Naive thymus-derived CD4-positive, alpha-beta T cell (primary cell): ENCODE measurements at regions of chr7 and their contacts with region 1.

Region 1: GRCh38 chr7:27196287-27196767 is 3.6 kb downstream of the HOXA13 start:
- DNase-seq: peak; percentile 62 to 82 (median 72)
- ATAC-seq: peak; percentile 55
- H3K4me3 ChIP-seq: no peak overlapping the region
- H3K4me3 Mint-ChIP-seq: no peak overlapping the region
- H3K27ac ChIP-seq: no peak overlapping the region
- H3K27ac Mint-ChIP-seq: peak overlapping the region in 2 of 9 donors; percentile 69
- H3K4me1 ChIP-seq: peaks cover 19 to 34% of the 10 kb centered on the region in 2 donors
- H3K4me1 Mint-ChIP-seq: peaks cover 9 to 47% (median 36%) of the 10 kb centered on the region in 7 donors
- H3K27me3 ChIP-seq: peaks cover 37 to 69% of the 10 kb centered on the region in 2 donors
- H3K27me3 Mint-ChIP-seq: peaks cover 78 to 85% (median 80%) of the 10 kb centered on the region in 5 donors

Region 2: DNA sequence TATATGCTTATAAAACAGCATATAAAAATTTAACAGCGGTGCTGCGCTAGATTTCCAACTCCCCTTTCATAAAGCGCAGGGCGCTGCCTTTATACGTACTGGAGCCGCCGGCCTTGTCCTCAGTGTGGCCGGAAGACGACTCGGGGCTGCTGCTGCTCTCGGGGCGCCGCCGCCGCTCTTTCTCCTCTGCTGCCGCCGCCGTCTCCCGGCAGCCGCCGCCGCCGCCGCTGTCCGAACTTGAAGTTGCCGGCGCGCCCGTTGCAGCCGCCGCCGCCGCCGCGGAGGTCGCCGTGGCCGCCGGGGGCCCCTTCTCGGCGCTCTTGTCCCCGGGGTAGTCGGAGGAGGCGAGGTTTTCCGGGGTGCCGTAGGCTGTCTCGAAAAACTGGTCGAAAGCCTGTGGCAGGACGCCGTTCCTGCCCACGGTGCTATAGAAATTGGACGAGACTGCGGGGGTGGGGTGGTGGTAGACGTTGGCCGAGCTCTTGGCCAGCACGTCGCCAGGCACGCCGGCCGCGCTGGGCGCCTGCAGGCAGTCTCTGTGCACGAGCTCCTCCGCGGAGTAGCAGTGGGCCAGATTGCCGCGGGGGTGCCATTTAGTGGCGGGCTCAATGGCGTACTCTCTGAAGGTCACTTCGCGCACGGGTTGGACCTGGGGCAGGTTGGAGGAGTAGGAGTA is 11.9 kb before region 1 on chr7:
- CTCF ChIA-PET with region 1: interaction called, 4 read pairs
- POLR2A ChIA-PET with region 1: no interaction called
- intact Hi-C with region 1: loop called in 1 of 2 experiments (anchors 2 kb)
- DNase-seq: peak in 2 of 9 donors; percentile 36 to 38
- ATAC-seq: peak; percentile 22
- H3K4me3 ChIP-seq: peak overlapping the region; percentile 39
- H3K4me3 Mint-ChIP-seq: peak overlapping the region; percentile 69 to 87 (median 79)
- H3K27ac ChIP-seq: no peak overlapping the region
- H3K27ac Mint-ChIP-seq: peak overlapping the region in 7 of 9 donors; percentile 43 to 84 (median 73)
- H3K4me1 ChIP-seq: peaks cover 40 to 52% of the 10 kb centered on the region in 2 donors
- H3K4me1 Mint-ChIP-seq: peaks cover 29 to 62% (median 51%) of the 10 kb centered on the region in 7 donors
- H3K27me3 ChIP-seq: peaks cover 47 to 89% of the 10 kb centered on the region in 2 donors
- H3K27me3 Mint-ChIP-seq: peaks cover 78 to 92% (median 81%) of the 10 kb centered on the region in 5 donors

Region 3: GRCh38 chr7:27576360-27576944 is 380.1 kb after region 1 on chr7:
- CTCF ChIA-PET with region 1: interaction called, 10 read pairs
- POLR2A ChIA-PET with region 1: no interaction called
- intact Hi-C with region 1: loop called (anchors 1 kb)
- DNase-seq: peak in 5 of 9 donors; percentile 15 to 38 (median 29)
- ATAC-seq: peak; percentile 67
- H3K4me3 ChIP-seq: no peak overlapping the region
- H3K4me3 Mint-ChIP-seq: no peak overlapping the region
- H3K27ac ChIP-seq: no peak overlapping the region
- H3K27ac Mint-ChIP-seq: no peak overlapping the region
- H3K4me1 ChIP-seq: no peaks in the 10 kb centered on the region
- H3K4me1 Mint-ChIP-seq: peaks cover 0 to 6% (median 0%) of the 10 kb centered on the region in 7 donors
- H3K27me3 ChIP-seq: no peaks in the 10 kb centered on the region
- H3K27me3 Mint-ChIP-seq: peaks cover 0 to 3% (median 0%) of the 10 kb centered on the region in 5 donors

Region 4: DNA sequence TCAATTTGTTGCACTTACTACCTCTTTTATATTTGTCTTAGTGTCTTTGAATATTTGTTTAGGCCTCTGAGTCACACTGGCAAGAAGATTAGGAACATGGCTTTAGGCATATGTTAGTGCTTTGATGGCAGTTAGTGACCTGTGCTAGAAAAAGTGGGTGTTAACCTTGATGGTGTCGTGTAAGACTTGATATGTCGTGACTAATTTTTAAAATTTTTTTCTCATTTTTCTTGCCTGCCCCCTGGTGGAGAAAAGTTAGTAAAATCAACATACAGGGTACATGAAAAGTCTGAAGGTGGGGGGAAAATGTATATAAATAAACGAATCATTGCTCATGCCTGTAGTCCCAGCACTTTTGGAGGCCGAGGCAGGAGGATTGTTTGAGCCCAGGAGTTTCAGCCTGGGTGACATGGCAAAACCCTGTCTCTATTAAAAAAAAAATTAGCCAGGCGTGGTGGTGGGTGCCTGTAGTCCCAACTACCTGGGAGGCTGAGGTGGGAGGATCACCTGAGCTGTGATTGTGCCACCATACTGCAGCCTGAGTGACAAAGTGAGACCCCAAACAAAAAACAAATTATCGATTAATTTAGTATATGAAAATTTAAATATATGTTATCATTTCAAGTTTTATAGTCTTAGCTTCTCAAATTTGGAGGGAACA is 588.2 kb after region 1 on chr7:
- CTCF ChIA-PET with region 1: interaction called, 3 read pairs
- POLR2A ChIA-PET with region 1: no interaction called
- intact Hi-C with region 1: loop called in 1 of 2 experiments (anchors 1 kb)
- DNase-seq: peak in 7 of 9 donors; percentile 30 to 54 (median 43)
- ATAC-seq: peak; percentile 73
- H3K4me3 ChIP-seq: no peak overlapping the region
- H3K4me3 Mint-ChIP-seq: no peak overlapping the region
- H3K27ac ChIP-seq: no peak overlapping the region
- H3K27ac Mint-ChIP-seq: peak overlapping the region in 1 of 9 donors; percentile 15
- H3K4me1 ChIP-seq: no peaks in the 10 kb centered on the region
- H3K4me1 Mint-ChIP-seq: peaks cover 4 to 35% (median 20%) of the 10 kb centered on the region in 7 donors
- H3K27me3 ChIP-seq: no peaks in the 10 kb centered on the region
- H3K27me3 Mint-ChIP-seq: no peaks in the 10 kb centered on the region

Region 5: DNA sequence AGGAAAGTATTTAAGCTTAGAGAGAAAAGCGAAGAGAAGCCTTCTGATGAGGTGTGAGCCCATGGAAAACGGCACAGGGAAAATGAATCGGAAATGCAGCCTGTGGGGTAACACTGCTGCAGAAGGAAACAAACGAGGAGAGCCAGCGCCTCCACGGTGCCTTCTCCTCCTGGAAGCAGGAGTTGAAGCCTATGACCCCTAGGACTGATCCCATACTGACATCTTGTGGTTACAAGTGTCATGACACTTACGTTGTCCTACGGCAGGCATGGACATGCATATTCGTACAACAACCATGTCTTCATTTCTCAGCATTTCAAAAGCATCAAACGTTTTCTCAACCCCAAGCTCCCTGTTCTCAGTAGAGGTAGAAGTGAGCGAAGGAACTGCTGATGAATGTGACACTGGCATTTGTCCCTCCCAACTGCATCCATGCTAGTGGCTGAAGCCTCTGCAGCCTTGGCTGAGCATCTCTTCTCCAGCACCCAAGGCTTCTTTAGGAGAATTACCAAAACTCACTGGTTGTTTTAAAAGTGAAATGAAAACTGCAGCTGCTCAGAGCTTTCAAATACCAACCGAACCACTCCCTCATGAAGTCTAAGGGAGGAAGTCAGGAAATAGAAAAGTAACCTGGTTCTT is 824.1 kb after region 1 on chr7:
- CTCF ChIA-PET with region 1: interaction called, 17 read pairs
- POLR2A ChIA-PET with region 1: no interaction called
- intact Hi-C with region 1: loop called (anchors 1 kb)
- DNase-seq: peak in 7 of 9 donors; percentile 27 to 63 (median 53)
- ATAC-seq: peak; percentile 90
- H3K4me3 ChIP-seq: no peak overlapping the region
- H3K4me3 Mint-ChIP-seq: peak overlapping the region in 1 of 10 donors; percentile 11
- H3K27ac ChIP-seq: no peak overlapping the region
- H3K27ac Mint-ChIP-seq: no peak overlapping the region
- H3K4me1 ChIP-seq: no peaks in the 10 kb centered on the region
- H3K4me1 Mint-ChIP-seq: peaks cover 0 to 17% (median 2%) of the 10 kb centered on the region in 7 donors
- H3K27me3 ChIP-seq: no peaks in the 10 kb centered on the region
- H3K27me3 Mint-ChIP-seq: peaks cover 0 to 3% (median 0%) of the 10 kb centered on the region in 5 donors

Region 6: GRCh38 chr7:28179120-28180030 is 983.0 kb after region 1 on chr7:
- CTCF ChIA-PET with region 1: no interaction called
- POLR2A ChIA-PET with region 1: no interaction called
- intact Hi-C with region 1: loop called in 1 of 2 experiments (anchors 10 kb)
- DNase-seq: peak; percentile 57 to 72 (median 71)
- ATAC-seq: peak; percentile 85
- H3K4me3 ChIP-seq: peak overlapping the region; percentile 51
- H3K4me3 Mint-ChIP-seq: peak overlapping the region; percentile 55 to 95 (median 72)
- H3K27ac ChIP-seq: peak overlapping the region; percentile 48
- H3K27ac Mint-ChIP-seq: peak overlapping the region in 8 of 9 donors; percentile 33 to 85 (median 61)
- H3K4me1 ChIP-seq: peaks cover 5 to 11% of the 10 kb centered on the region in 2 donors
- H3K4me1 Mint-ChIP-seq: peaks cover 11 to 50% (median 24%) of the 10 kb centered on the region in 7 donors
- H3K27me3 ChIP-seq: no peaks in the 10 kb centered on the region
- H3K27me3 Mint-ChIP-seq: peaks cover 0 to 43% (median 0%) of the 10 kb centered on the region in 5 donors

Region 7: GRCh38 chr7:28955718-28956619 is 1759.6 kb after region 1 on chr7:
- CTCF ChIA-PET with region 1: no interaction called
- POLR2A ChIA-PET with region 1: no interaction called
- intact Hi-C with region 1: loop called in 1 of 2 experiments (anchors 10 kb)
- DNase-seq: peak in 2 of 9 donors; percentile 17 to 37
- ATAC-seq: peak; percentile 47
- H3K4me3 ChIP-seq: no peak overlapping the region
- H3K4me3 Mint-ChIP-seq: peak overlapping the region in 5 of 10 donors; percentile 20 to 73 (median 49)
- H3K27ac ChIP-seq: no peak overlapping the region
- H3K27ac Mint-ChIP-seq: no peak overlapping the region
- H3K4me1 ChIP-seq: peaks cover 0 to 3% of the 10 kb centered on the region in 2 donors
- H3K4me1 Mint-ChIP-seq: peaks cover 4 to 12% (median 8%) of the 10 kb centered on the region in 7 donors
- H3K27me3 ChIP-seq: no peaks in the 10 kb centered on the region
- H3K27me3 Mint-ChIP-seq: peaks cover 61 to 75% (median 68%) of the 10 kb centered on the region in 5 donors